ENCODE measurements at regions of chr6 and their contacts with region 1.

Region 1: DNA sequence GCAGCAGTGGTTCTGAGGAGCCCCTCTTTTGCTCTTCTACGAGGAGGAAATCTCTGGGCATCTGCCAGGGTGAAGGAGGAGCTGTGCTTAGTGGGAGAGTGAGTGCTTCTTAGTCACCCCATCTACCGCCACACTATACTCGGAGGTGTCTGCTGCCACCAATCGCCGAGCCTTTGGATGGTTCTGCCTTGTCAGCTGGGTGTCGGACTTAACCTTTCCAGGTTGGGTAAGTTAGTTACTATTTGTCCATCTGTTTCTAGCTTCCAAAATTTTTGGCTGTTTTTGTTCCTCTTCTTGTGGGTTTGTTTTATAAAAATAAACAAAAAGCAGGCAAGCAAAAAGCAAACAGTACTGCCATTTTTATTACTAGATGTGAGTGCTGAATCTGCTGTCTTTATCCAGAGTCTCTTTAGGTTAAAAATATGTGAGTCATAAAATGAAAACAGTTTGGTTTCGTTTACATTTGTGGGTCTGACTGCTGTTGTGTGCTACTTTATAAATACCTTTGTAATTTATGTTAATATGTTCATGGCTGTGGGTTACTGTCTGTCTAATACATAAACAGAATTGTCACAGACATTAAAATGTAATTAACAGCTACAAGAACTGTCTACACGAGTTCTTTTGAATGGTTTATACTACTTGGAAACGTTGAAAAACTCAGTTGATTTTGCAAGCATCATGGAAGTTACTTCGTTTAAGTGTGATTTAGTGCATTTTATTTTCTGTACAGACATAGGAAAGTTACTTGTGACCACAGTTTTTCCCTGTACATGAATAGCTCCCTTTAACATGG is 89.2 kb downstream of the ARID1B start:
- DNase-seq: peak in 4 of 9 experiments; percentile 17 to 32 (median 20)
- ATAC-seq: peak; percentile 49
- H3K4me3 ChIP-seq: no peak overlapping the region
- H3K4me3 Mint-ChIP-seq: no peak overlapping the region
- H3K27ac ChIP-seq: no peak overlapping the region
- H3K27ac Mint-ChIP-seq: peak overlapping the region; percentile 38
- H3K4me1 ChIP-seq: peaks cover 35% of the 10 kb centered on the region
- H3K4me1 Mint-ChIP-seq: peaks cover 88% of the 10 kb centered on the region
- H3K27me3 ChIP-seq: no peaks in the 10 kb centered on the region
- H3K27me3 Mint-ChIP-seq: no peaks in the 10 kb centered on the region
- CTCF ChIP-seq: no peak

Region 2: DNA sequence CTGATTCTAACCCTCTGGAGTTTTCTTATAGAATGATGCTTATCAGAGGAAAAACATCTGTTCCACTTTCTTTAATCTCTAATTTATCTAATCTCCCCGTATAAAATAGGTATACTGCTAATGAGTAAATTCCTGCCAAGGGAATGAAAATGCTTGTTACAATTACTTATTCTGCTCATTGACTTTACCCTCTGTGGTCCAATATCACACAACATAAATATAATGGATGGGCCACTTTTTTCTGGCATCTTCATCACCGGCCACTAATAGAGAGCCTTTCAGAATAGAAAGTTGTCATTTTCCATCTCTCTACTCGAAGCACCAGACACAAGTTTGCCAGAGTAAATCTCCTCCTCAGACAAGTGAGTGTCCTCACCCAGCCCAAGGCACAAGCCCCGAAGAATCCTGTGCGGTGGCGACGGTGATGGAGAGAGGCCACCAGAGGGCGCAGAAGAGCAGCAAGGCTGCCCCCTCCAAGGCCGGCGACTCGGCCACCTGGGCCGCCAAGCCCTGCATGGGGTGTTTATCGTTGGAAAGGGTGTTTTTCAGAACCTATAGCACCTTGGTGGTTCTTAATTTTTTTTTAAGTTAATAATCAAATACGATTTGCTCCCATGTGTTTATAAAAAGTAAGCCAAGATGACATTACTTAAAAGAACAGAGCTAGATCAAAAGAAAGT is 302.2 kb before region 1 on chr6:
- CTCF ChIA-PET with region 1: no interaction called
- POLR2A ChIA-PET with region 1: no interaction called
- intact Hi-C with region 1: loop called (anchors 1 to 5 kb)
- DNase-seq: peak; percentile 59 to 88 (median 73)
- ATAC-seq: peak; percentile 93
- H3K4me3 ChIP-seq: no peak overlapping the region
- H3K4me3 Mint-ChIP-seq: no peak overlapping the region
- H3K27ac ChIP-seq: no peak overlapping the region
- H3K27ac Mint-ChIP-seq: no peak overlapping the region
- H3K4me1 ChIP-seq: no peaks in the 10 kb centered on the region
- H3K4me1 Mint-ChIP-seq: no peaks in the 10 kb centered on the region
- H3K27me3 ChIP-seq: peaks cover 0 to 3% of the 10 kb centered on the region in 2 experiments
- H3K27me3 Mint-ChIP-seq: peaks cover 6% of the 10 kb centered on the region
- CTCF ChIP-seq: peak; percentile 89

Region 3: DNA sequence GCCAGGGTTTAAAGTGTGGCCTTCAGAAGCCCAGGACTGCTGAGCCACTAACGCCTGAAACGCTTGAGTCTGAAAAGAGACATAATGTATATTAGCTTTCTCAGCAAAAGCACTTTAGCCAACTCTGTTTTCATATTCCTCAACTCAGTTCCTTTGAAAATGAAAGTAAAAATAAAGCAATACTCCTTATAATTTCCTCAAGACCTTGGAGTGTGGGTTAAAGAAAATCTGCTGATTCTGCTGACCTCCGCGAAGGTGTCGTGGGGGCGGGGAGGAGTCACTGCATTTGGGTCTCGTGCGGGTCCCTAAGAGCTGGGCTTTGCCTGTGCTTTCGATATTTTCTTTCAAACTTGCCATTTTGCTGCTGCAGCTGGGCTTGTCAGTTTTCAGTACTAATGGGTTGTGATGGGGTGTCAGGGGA is 231.5 kb before region 1 on chr6:
- CTCF ChIA-PET with region 1: no interaction called
- POLR2A ChIA-PET with region 1: no interaction called
- intact Hi-C with region 1: no loop called
- DNase-seq: no peak
- ATAC-seq: no peak
- H3K4me3 ChIP-seq: no peak overlapping the region
- H3K4me3 Mint-ChIP-seq: peak overlapping the region; percentile 27
- H3K27ac ChIP-seq: no peak overlapping the region
- H3K27ac Mint-ChIP-seq: no peak overlapping the region
- H3K4me1 ChIP-seq: peaks cover 10% of the 10 kb centered on the region
- H3K4me1 Mint-ChIP-seq: peaks cover 20% of the 10 kb centered on the region
- H3K27me3 ChIP-seq: no peaks in the 10 kb centered on the region
- H3K27me3 Mint-ChIP-seq: no peaks in the 10 kb centered on the region
- CTCF ChIP-seq: no peak

Region 4: DNA sequence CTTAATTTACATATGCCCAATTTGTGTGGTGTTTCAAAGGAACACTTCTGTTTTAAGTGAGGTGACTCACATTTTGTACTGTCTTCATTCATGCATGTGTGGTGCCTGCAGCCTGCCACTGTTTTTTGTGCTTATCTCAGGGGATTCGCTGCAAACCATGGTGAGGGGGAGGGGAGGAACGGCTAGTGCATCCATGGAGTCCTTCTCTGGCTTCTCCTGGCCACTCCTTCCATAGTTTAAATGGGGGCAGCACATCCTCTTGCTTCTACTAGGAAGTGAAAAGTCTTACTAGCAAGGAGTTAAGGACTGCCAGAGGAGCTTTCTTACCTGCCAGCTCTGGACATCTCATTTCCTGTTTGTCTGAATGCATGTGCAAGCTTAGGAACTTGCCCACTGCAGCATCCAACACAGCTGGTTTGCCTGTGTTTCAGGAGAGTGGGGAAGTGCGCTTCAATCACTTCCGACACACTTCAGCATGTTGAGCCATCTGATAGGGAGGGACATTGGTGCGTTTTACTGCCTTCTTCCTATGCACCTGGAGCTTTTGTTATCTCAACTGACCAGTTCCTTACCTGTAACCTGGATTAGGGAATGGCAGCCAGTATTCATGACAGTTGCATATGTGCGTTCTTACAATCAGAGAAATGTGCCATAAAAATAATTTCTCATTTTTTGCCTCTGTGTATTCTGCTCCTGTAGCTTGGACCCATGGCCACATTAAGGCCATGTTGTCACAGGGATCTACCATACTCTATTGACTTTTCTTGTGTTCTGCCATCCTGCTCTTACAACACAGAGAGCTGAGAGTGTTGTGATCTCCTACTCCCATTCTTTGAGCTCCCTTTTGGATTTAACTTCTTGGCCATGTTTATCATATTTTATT is 122.1 kb after region 1 on chr6:
- CTCF ChIA-PET with region 1: no interaction called
- POLR2A ChIA-PET with region 1: no interaction called
- intact Hi-C with region 1: no loop called
- DNase-seq: peak in 1 of 9 experiments; percentile 10
- ATAC-seq: no peak
- H3K4me3 ChIP-seq: no peak overlapping the region
- H3K4me3 Mint-ChIP-seq: no peak overlapping the region
- H3K27ac ChIP-seq: no peak overlapping the region
- H3K27ac Mint-ChIP-seq: peak overlapping the region; percentile 16
- H3K4me1 ChIP-seq: peaks cover 24% of the 10 kb centered on the region
- H3K4me1 Mint-ChIP-seq: peaks cover 72% of the 10 kb centered on the region
- H3K27me3 ChIP-seq: no peaks in the 10 kb centered on the region
- H3K27me3 Mint-ChIP-seq: no peaks in the 10 kb centered on the region
- CTCF ChIP-seq: no peak

Measured in CD8-positive, alpha-beta T cell (primary cell).